ENCODE measurements at regions of chr22 and their contacts with region 1.

Region 1: DNA sequence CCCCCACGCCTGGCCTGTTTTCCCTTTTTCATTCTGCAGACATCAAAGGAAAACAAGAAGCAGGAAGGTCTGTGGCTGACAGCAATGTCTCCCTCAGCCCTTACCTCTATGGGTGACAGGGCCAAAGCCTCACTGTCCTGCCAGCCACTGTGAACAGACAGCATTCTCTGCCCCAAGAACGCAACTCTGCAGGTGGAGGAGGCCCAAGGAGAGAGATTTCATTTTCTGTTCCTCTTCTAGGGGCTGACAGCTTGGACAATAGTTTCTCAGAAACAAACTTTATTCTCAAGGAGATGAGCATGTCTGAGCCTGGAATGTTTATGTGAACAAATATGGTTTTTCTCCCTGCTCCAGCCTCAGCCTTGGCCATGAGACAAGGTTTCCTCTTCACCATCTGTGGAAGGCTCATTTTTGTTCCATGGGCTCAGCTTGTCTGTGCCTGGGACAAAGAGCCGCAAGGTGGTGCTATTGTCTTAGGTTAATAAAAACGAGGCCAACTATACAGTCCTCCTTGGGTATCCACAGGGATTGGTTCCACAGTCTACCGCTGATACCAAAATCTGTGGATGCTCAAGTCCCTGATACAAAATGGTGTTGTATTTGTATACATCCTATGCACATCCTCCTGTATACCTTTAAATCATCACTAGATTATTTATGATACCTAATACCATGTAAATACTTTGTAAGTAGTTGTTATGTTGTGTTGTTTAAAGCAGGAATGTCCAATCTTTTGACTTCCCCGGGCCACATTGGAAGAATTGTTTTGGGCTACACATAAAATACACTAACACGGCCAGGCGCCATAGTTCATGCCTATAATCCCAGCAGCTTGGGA is 5.8 kb downstream of the PIWIL3 start:
- DNase-seq: peak in 2 of 3 donors; percentile 57 to 60
- ATAC-seq: peak; percentile 87 to 96 (median 94)
- H3K4me3 ChIP-seq: no peak overlapping the region
- H3K27ac ChIP-seq: no peak overlapping the region
- H3K4me1 ChIP-seq: no peaks in the 10 kb centered on the region
- H3K27me3 ChIP-seq: no peaks in the 10 kb centered on the region
- CTCF ChIP-seq: peak; percentile 63 to 91 (median 85)
- POLR2A ChIP-seq: no peak

Region 2: DNA sequence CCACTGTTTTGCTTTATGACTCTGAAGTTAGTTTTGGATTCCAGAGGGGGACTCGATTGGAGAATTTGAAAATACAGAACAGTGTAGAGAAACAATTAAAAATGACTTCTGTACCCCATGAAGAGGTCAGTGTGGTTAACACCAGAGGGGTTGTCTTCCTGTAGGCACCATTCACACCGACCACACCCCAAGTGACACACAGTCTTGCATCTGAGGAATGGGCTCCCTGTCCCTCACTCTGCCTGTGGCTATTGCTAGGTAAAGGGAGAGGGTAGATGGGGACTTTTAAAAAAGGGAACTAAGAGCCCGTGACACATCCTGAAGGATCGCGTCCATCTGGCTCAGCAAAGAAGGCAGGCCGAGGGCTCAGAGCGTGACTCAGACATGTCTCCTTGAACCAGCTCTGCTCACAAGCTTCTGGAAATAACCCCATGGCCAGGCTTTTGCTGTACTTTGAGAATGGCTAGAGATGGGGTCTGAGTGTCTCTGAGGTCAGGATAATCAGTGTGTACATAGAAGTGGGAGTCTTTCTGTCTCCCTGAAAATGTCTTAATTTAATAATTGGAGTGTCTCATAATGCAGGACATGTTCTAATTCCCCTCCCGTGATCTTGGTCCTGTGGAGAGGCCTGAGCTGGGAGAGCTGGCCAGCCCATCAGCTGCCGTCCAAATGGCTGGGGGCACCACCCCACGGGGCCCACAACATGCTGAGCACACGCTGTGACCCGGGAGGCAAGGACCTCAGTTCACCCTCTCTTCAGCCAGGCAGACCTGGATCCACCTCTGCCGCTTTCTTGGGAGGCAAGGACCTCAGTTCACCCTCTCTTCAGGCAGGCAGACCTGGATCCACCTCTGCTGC is 76.5 kb after region 1 on chr22:
- intact Hi-C with region 1: loop called (anchors 5 to 10 kb)
- DNase-seq: no peak
- ATAC-seq: no peak
- H3K4me3 ChIP-seq: no peak overlapping the region
- H3K27ac ChIP-seq: no peak overlapping the region
- H3K4me1 ChIP-seq: no peaks in the 10 kb centered on the region
- H3K27me3 ChIP-seq: no peaks in the 10 kb centered on the region
- CTCF ChIP-seq: no peak
- POLR2A ChIP-seq: no peak

Region 3: GRCh38 chr22:24859587-24859986 is 90.8 kb after region 1 on chr22:
- intact Hi-C with region 1: loop called (anchors 5 to 10 kb)
- DNase-seq: no peak
- ATAC-seq: peak in 1 of 4 donors; percentile 33
- H3K4me3 ChIP-seq: no peak overlapping the region
- H3K27ac ChIP-seq: no peak overlapping the region
- H3K4me1 ChIP-seq: no peaks in the 10 kb centered on the region
- H3K27me3 ChIP-seq: no peaks in the 10 kb centered on the region
- CTCF ChIP-seq: no peak
- POLR2A ChIP-seq: no peak

Region 4: DNA sequence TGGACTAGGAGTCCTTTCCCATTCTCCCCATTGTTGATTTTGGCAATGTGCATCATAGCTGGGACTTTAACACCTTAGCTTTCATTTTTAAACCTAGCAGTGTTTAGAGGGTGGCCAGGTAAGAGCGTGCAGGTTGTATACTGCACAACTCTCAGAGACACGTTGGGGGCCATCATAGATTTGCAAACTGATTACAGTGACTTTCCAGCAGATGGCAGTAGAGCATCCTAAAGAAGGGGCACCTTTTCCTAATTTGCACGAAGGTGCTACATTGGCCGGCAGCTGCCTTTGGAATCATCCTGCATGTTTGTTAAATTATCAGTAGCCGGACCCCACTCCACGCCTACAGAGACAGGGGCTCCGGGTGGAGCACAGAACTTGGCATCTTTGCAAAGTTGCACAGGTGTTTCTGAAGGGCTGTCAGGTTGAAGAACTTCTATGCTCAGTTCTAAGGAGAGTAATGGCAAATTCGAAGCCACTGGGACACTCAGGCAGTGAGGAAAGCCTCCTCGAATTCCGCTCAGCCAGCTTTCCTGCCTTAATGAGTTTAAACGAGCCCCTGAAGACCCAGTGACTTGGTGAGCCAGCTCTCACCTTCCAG is 170.1 kb after region 1 on chr22:
- intact Hi-C with region 1: no loop called
- DNase-seq: no peak
- ATAC-seq: peak; percentile 77 to 88 (median 82)
- H3K4me3 ChIP-seq: no peak overlapping the region
- H3K27ac ChIP-seq: no peak overlapping the region
- H3K4me1 ChIP-seq: no peaks in the 10 kb centered on the region
- H3K27me3 ChIP-seq: no peaks in the 10 kb centered on the region
- CTCF ChIP-seq: peak; percentile 70 to 78 (median 74)
- POLR2A ChIP-seq: no peak